K562 (cell line): ENCODE measurements at regions of chr13 and their contacts with region 1.

Region 1: GRCh38 chr13:60226507-60226906 is 62.8 kb upstream of the DIAPH3 start:
- DNase-seq: peak; percentile 8 to 76 (median 32)
- ATAC-seq: peak; percentile 92
- H3K4me3 ChIP-seq: no peak overlapping the region
- H3K27ac ChIP-seq: no peak overlapping the region
- H3K4me1 ChIP-seq: peaks cover 5 to 32% of the 10 kb centered on the region in 2 experiments; a peak in 4 of 5 replicates
- H3K27me3 ChIP-seq: no peaks in the 10 kb centered on the region
- CTCF ChIP-seq: peak; percentile 67 to 75 (median 73)
- EP300 ChIP-seq: no peak
- POLR2A ChIP-seq: no peak
- RAD21 ChIP-seq: peak; percentile 80 to 86

Region 2: DNA sequence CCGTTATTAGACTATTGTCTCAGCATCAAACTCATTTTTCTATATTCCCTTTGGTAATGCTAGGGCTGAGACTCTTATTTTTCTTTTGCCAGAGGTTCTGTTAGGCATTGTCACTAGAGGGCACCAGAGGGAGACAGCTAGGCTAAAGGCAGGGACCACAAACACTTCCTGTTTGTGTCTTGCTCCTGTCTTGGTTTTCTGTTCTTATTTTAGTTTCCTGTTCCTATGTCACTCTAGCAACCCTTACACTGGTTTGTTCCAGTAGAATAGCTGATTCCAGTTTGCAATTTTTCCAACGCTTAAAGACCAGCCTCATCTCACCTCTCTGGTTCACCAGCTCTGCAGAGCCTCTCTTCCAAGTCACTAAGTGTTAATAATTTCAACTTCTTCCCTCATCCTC is 834.8 kb before region 1 on chr13:
- CTCF ChIA-PET with region 1: no interaction called
- POLR2A ChIA-PET with region 1: no interaction called
- in situ Hi-C with region 1: no loop called
- intact Hi-C with region 1: loop called (anchors 10 kb)
- DNase-seq: peak; percentile 7 to 64 (median 22)
- ATAC-seq: peak; percentile 83
- H3K4me3 ChIP-seq: no peak overlapping the region
- H3K27ac ChIP-seq: no peak overlapping the region
- H3K4me1 ChIP-seq: no peaks in the 10 kb centered on the region
- H3K27me3 ChIP-seq: no peaks in the 10 kb centered on the region
- CTCF ChIP-seq: peak; percentile 60 to 66 (median 61)
- EP300 ChIP-seq: no peak
- POLR2A ChIP-seq: no peak
- RAD21 ChIP-seq: peak; percentile 68 to 72

Region 3: DNA sequence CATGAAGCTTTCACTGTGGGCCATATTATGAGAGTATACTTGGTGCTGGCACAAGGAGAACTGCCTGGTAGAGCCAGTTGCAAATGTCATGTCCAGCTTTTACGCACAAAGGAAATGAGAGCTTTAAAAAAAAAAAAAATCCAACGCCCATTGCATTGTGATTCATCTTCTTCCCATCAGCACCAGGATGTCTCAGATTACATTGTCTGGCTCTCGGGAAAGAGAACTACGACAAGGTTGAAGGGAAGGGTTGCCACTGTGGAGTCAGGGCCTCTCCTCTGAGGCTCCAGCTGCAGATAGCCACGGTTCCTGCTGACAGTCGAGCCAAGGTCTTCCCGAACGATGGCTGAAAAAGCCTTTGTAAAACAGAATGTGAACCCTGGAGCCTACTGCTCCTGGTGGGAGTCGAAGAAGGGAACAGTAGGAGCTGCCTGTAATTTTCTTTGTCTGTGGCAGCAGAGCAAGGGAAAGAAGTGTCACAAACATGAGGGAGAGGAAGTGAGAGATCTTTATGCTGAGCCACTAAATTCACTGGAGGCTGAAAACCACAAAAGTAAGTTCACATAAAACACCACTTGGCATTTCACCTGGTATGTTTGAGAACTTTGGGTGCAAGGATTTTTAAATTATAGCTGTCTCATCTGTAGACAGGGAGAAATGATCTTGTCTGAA is 767.5 kb before region 1 on chr13:
- CTCF ChIA-PET with region 1: no interaction called
- POLR2A ChIA-PET with region 1: no interaction called
- in situ Hi-C with region 1: no loop called
- intact Hi-C with region 1: loop called (anchors 10 kb)
- DNase-seq: no peak
- ATAC-seq: no peak
- H3K4me3 ChIP-seq: no peak overlapping the region
- H3K27ac ChIP-seq: no peak overlapping the region
- H3K4me1 ChIP-seq: peaks cover 4 to 6% of the 10 kb centered on the region in 2 experiments; a peak in 3 of 5 replicates
- H3K27me3 ChIP-seq: no peaks in the 10 kb centered on the region
- CTCF ChIP-seq: no peak
- EP300 ChIP-seq: no peak
- POLR2A ChIP-seq: no peak
- RAD21 ChIP-seq: no peak

Region 4: GRCh38 chr13:59771272-59771671 is 455.2 kb before region 1 on chr13:
- CTCF ChIA-PET with region 1: no interaction called
- POLR2A ChIA-PET with region 1: no interaction called
- in situ Hi-C with region 1: no loop called
- intact Hi-C with region 1: loop called (anchors 10 kb)
- DNase-seq: peak in 2 of 4 experiments; percentile 4 to 11
- ATAC-seq: no peak
- H3K4me3 ChIP-seq: no peak overlapping the region
- H3K27ac ChIP-seq: no peak overlapping the region
- H3K4me1 ChIP-seq: no peaks in the 10 kb centered on the region
- H3K27me3 ChIP-seq: no peaks in the 10 kb centered on the region
- CTCF ChIP-seq: peak; percentile 7 to 48 (median 24); a peak in 2 of 6 replicates
- EP300 ChIP-seq: no peak
- POLR2A ChIP-seq: no peak
- RAD21 ChIP-seq: peak; percentile 32 to 40

Region 5: GRCh38 chr13:60163478-60164233 is 62.9 kb before region 1 on chr13 and contains the start of gene DIAPH3:
- CTCF ChIA-PET with region 1: no interaction called
- POLR2A ChIA-PET with region 1: no interaction called
- in situ Hi-C with region 1: no loop called
- intact Hi-C with region 1: loop called (anchors 5 kb)
- DNase-seq: peak; percentile 88 to 95 (median 90)
- ATAC-seq: peak; percentile 99
- H3K4me3 ChIP-seq: peak within 1 kb of the TSS; percentile 70
- H3K27ac ChIP-seq: peak within 1 kb of the TSS; percentile 82
- H3K4me1 ChIP-seq: peaks cover 0 to 10% of the 10 kb centered on the region in 2 experiments; a peak in 3 of 5 replicates
- H3K27me3 ChIP-seq: no peaks in the 10 kb centered on the region
- CTCF ChIP-seq: no peak
- EP300 ChIP-seq: no peak; the same call in 1 of the 2 replicates
- POLR2A ChIP-seq: peak; percentile 86
- RAD21 ChIP-seq: no peak
- polyA plus RNA-seq, gene DIAPH3: 10.0 to 10.6 TPM

Region 6: GRCh38 chr13:60329221-60329983 is 102.9 kb after region 1 on chr13:
- CTCF ChIA-PET with region 1: no interaction called
- POLR2A ChIA-PET with region 1: no interaction called
- in situ Hi-C with region 1: no loop called
- intact Hi-C with region 1: loop called (anchors 2 kb)
- DNase-seq: peak; percentile 32 to 70 (median 38)
- ATAC-seq: peak; percentile 96
- H3K4me3 ChIP-seq: no peak overlapping the region
- H3K27ac ChIP-seq: no peak overlapping the region
- H3K4me1 ChIP-seq: no peaks in the 10 kb centered on the region; a peak in 1 of 5 replicates
- H3K27me3 ChIP-seq: no peaks in the 10 kb centered on the region
- CTCF ChIP-seq: peak; percentile 58 to 73 (median 65)
- EP300 ChIP-seq: no peak
- POLR2A ChIP-seq: no peak
- RAD21 ChIP-seq: peak; percentile 65 to 81